Endothelial cell of umbilical vein (primary cell): ENCODE measurements at regions of chr6 and their contacts with region 1.

Region 1: DNA sequence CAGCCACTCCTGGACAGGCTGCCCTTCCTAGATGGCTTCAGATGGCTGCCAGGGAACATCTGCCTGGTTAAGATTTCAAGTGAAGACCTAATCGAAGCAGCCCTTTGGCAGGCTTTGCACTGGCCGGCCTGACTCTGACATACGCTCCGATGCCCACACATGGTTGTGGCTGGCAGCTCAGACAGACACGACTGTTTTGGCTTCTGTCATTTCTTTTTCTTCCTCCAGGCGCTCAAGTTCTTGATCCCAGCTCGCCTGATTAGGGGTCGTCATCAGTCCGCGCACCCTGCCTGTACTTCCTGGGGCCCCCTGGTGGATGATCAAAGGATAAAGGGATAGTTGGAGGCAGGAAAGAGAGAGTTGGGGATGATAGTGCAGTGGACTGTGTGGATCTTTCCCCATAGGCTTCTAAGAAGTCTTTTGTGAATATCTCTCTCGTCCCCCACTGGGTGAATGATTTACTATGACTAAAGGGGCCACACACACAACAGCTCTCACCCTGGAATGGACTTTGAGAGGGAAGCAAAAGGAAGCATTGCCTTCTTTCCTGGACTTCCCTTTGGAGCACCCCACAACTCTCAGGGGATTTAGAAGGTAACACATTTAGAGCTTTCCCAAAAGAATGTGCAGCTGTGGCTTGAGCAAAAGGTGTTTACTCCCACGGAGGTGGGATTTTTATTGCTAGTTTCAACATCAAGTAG is 21.4 kb upstream of the TRAM2 start:
- DNase-seq: peak; percentile 54
- H3K4me3 ChIP-seq: no peak overlapping the region
- H3K27ac ChIP-seq: no peak overlapping the region
- H3K4me1 ChIP-seq: peaks cover 34% of the 10 kb centered on the region
- H3K27me3 ChIP-seq: no peaks in the 10 kb centered on the region
- CTCF ChIP-seq: peak; percentile 63 to 75
- POLR2A ChIP-seq: no peak

Region 2: GRCh38 chr6:52551401-52552277 is 46.6 kb before region 1 on chr6:
- CTCF ChIA-PET with region 1: interaction called, 5 read pairs
- POLR2A ChIA-PET with region 1: no interaction called
- dilution Hi-C with region 1: no loop called
- intact Hi-C with region 1: loop called (anchors 1 kb)
- DNase-seq: peak; percentile 94
- H3K4me3 ChIP-seq: no peak overlapping the region
- H3K27ac ChIP-seq: peak overlapping the region; percentile 82
- H3K4me1 ChIP-seq: peaks cover 60% of the 10 kb centered on the region
- H3K27me3 ChIP-seq: no peaks in the 10 kb centered on the region
- CTCF ChIP-seq: no peak
- POLR2A ChIP-seq: no peak

Region 3: GRCh38 chr6:52582446-52582845 is 15.8 kb before region 1 on chr6:
- CTCF ChIA-PET with region 1: interaction called, 20 read pairs
- POLR2A ChIA-PET with region 1: no interaction called
- dilution Hi-C with region 1: no loop called
- intact Hi-C with region 1: loop called (anchors 1 kb)
- DNase-seq: no peak
- H3K4me3 ChIP-seq: no peak overlapping the region
- H3K27ac ChIP-seq: no peak overlapping the region
- H3K4me1 ChIP-seq: peaks cover 8% of the 10 kb centered on the region
- H3K27me3 ChIP-seq: no peaks in the 10 kb centered on the region
- CTCF ChIP-seq: no peak
- POLR2A ChIP-seq: no peak

Region 4: GRCh38 chr6:52610745-52611355 is 12.6 kb after region 1 on chr6:
- CTCF ChIA-PET with region 1: interaction called, 12 read pairs
- POLR2A ChIA-PET with region 1: no interaction called
- dilution Hi-C with region 1: no loop called
- intact Hi-C with region 1: loop called (anchors 1 kb)
- DNase-seq: no peak
- H3K4me3 ChIP-seq: no peak overlapping the region
- H3K27ac ChIP-seq: no peak overlapping the region
- H3K4me1 ChIP-seq: peaks cover 40% of the 10 kb centered on the region
- H3K27me3 ChIP-seq: no peaks in the 10 kb centered on the region
- CTCF ChIP-seq: no peak
- POLR2A ChIP-seq: no peak

Region 5: DNA sequence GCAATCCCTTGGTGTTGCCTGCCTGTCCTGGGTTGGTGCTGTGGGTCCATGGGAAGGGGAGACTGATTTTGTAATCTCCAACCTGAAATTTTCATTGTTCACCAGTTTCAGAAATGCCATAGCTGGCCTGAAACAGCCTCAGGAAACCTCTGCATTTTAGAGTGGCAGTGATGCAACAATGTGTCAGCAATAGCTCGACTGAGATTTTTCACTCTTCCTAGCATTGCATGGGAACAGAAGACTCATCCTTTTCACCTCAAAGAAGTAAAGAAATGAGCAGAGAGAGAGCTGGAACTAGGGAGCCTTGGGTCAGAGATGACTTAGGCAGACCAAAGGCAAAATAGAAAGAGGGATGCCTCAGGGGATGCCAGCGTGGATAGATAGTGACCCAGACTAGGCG is 48.9 kb after region 1 on chr6:
- CTCF ChIA-PET with region 1: interaction called, 17 read pairs
- POLR2A ChIA-PET with region 1: no interaction called
- dilution Hi-C with region 1: no loop called
- intact Hi-C with region 1: no loop called
- DNase-seq: no peak
- H3K4me3 ChIP-seq: no peak overlapping the region
- H3K27ac ChIP-seq: no peak overlapping the region
- H3K4me1 ChIP-seq: no peaks in the 10 kb centered on the region
- H3K27me3 ChIP-seq: peaks cover 0 to 2% of the 10 kb centered on the region in 2 experiments
- CTCF ChIP-seq: no peak
- POLR2A ChIP-seq: no peak

Region 6: GRCh38 chr6:52653151-52653550 is 54.9 kb after region 1 on chr6:
- CTCF ChIA-PET with region 1: interaction called, 17 read pairs
- POLR2A ChIA-PET with region 1: no interaction called
- dilution Hi-C with region 1: no loop called
- intact Hi-C with region 1: no loop called
- DNase-seq: no peak
- H3K4me3 ChIP-seq: no peak overlapping the region
- H3K27ac ChIP-seq: no peak overlapping the region
- H3K4me1 ChIP-seq: no peaks in the 10 kb centered on the region
- H3K27me3 ChIP-seq: peaks cover 5 to 9% of the 10 kb centered on the region in 2 experiments
- CTCF ChIP-seq: no peak
- POLR2A ChIP-seq: no peak